ENCODE measurements at regions of chr16 and their contacts with region 1.

Region 1: DNA sequence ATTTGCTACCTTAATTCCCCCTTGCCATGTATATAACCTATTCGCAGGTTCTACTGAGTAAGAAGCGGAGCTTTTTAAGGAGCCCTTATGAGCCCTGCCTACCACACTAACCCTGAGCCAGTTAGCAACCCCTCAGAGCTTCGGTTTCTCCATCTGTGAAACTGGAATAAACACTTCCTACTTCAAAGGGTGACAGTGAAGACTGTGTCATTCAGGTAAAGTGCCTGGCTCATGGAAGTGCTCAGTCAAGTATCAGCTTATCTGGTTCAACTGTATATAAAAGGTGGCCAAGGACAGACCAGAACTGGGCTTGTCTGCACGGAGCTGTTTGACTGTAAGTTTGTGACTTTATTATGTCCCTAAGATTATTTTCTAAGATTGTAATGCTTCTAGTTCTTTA is 31.0 kb downstream of the TXNDC11 start:
- DNase-seq: no peak
- H3K4me3 ChIP-seq: no peak overlapping the region
- H3K4me1 ChIP-seq: no peaks in the 10 kb centered on the region
- H3K27me3 ChIP-seq: no peaks in the 10 kb centered on the region

Region 2: DNA sequence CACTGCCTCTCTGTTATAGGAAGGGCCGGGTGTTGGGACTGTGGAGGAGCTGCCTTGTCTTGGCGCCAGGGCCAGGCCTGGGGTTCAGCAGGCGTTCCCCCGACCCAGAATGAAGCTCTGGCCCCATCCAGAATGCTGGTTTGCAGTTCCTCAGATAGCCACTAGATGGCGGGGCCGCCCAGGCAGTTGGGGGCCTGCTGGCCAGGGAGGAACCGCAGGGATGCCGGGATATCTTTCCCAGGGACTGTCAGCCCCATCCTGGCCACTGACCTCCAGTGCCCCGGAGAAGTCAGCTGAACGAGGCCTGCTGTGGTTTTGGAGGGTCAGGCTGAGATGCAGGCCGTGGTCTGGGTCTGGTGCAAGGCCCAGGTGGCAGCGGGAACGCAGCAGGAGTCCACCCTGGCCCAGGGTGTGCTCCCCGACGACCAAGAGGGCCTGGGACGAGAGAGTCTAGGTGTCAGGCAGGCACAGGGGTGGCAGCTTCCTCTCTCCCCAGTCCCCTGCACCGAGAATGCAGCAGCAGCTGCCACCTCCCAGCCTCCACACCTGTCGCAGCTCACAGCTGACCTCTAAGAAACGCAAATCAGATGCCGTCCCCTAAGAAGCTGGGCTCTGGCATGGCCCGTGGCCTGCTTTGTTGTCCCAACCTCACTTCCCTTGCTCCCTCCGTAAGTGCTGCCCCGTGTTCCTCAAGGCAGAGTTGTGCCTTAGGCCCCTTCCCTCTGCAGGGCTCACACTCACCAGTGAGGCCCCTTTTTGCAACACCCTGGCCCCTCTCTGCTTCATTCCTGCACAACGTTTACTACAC is 315.2 kb before region 1 on chr16:
- in situ Hi-C with region 1: loop called (anchors 5 kb)
- DNase-seq: peak; percentile 71 to 89
- H3K4me3 ChIP-seq: no peak overlapping the region
- H3K4me1 ChIP-seq: no peaks in the 10 kb centered on the region
- H3K27me3 ChIP-seq: no peaks in the 10 kb centered on the region

Region 3: GRCh38 chr16:12010388-12011251 is 299.0 kb after region 1 on chr16:
- in situ Hi-C with region 1: no loop called
- DNase-seq: no peak
- H3K4me3 ChIP-seq: no peak overlapping the region
- H3K4me1 ChIP-seq: no peaks in the 10 kb centered on the region
- H3K27me3 ChIP-seq: no peaks in the 10 kb centered on the region